ENCODE measurements at regions of chr1 and their contacts with region 1.

Region 1: GRCh38 chr1:165114022-165114888 is 242.3 kb downstream of the LMX1A start:
- DNase-seq: no peak
- ATAC-seq: no peak
- H3K4me3 ChIP-seq: no peak overlapping the region
- H3K27ac ChIP-seq: no peak overlapping the region
- H3K4me1 ChIP-seq: no peaks in the 10 kb centered on the region
- H3K27me3 ChIP-seq: no peaks in the 10 kb centered on the region

Region 2: GRCh38 chr1:165073185-165074007 is 40.9 kb before region 1 on chr1:
- intact Hi-C with region 1: no loop called
- DNase-seq: no peak
- ATAC-seq: no peak
- H3K4me3 ChIP-seq: no peak overlapping the region
- H3K27ac ChIP-seq: no peak overlapping the region
- H3K4me1 ChIP-seq: no peaks in the 10 kb centered on the region
- H3K27me3 ChIP-seq: no peaks in the 10 kb centered on the region

Region 3: DNA sequence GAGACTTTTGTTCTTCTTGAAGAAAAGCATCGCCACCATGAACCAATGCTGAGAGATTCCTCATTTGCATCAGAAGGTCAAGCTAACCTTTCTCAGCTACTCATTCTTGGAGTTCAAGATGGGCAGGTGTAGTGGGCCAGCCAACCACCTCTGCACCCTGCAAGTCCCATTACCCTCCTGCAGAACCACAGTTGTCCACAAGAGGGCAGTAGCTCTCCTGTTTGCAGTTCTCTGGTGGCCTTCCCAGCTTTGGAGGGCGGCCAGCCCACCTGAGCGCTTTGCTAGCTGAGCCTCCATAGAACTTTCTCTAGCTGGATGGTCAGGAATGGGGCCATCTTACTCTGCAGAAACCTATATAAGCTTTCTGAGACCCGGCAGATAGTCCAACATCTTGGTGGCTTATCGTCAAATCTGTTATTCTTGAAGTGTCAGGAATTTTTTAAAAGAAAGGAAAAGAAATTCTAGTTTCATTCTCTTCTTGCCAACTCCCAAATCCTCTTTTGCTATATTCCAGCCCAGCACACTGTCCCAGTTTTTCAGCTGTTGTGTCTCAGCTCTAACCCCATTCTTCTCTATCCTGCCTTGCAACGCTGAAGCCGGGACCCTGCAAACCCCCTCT is 253.2 kb after region 1 on chr1:
- intact Hi-C with region 1: loop called in 1 of 2 experiments (anchors 10 kb)
- DNase-seq: peak; percentile 79 to 88
- ATAC-seq: peak; percentile 65
- H3K4me3 ChIP-seq: no peak overlapping the region
- H3K27ac ChIP-seq: no peak overlapping the region
- H3K4me1 ChIP-seq: no peaks in the 10 kb centered on the region
- H3K27me3 ChIP-seq: no peaks in the 10 kb centered on the region

Region 4: DNA sequence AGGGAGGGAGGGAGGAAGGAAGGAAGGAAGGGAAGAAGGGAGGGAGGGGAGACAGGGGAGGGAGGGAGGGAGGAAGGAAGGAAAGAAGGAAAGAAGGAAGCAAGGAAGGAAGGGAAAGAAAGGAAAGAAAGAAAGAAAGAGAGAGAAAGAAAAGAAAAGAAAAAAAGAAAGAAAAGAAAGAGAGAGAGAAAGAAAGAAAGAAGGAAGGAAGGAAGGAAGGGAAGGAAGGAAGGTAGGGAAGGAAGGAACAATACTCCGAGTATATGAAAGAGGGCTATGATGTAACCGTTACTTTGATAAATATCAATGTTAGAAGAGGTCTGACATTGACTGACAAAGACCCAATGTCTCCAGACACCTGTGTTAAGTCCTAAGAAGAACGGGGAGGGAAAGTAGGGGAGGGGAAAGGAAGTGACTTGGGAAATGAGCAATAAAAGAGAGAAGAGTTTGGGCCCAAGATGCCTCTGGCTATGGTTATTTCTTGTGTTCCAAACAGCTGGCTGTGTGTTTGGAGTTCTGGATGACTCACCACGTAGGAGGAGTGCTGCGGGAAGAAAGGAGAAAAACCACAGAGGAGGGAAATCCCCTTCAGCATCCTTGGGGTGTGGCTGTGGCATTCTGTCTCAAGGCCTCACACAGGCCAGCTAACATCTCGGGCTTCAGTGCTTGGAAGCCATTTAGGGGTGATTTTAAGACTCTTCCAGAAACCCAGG is 367.7 kb after region 1 on chr1:
- intact Hi-C with region 1: no loop called
- DNase-seq: no peak
- ATAC-seq: peak; percentile 86
- H3K4me3 ChIP-seq: no peak overlapping the region
- H3K27ac ChIP-seq: no peak overlapping the region
- H3K4me1 ChIP-seq: no peaks in the 10 kb centered on the region
- H3K27me3 ChIP-seq: no peaks in the 10 kb centered on the region